Upper lobe of right lung (tissue), 1 donor: ENCODE measurements at regions of chr1 and their contacts with region 1.

Region 1: DNA sequence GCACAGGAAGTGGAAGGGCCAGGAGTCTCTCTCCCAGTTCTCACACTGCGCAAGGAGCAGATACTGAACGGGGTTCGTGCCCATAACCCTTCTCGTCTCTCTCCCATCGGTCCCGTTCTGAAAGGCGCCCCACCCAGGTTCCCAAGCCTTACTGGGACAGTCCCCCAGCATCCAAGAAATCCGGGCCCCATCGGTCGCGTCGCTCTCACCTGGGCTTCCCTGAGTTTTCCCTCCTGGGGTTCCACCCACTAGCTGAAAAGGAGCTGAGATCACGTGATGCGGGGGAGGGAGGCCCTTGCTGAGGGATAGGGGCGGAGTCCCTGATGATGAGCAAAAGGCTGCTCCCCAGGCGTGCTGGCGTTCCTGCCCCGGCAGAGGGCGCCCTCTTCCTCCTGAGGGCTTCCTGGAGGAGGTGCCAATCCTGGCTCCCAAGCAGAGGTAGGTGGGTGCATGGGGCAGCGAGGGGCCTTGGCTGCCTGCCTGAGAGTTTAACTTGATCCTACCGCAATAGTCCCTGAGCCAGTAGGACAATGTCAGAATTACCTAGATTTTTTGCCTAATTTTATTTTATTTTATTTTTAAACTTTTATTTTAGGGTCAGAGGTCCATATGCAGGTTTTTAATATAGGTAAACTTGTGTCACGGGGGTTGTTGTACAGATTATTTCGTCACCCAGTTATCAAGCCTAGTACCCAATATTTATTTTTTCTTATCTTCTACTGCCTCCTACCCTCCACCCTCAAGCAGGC is at the start of gene SPOCD1:
- DNase-seq: peak; percentile 93
- ATAC-seq: peak; percentile 99
- H3K4me3 ChIP-seq: no peak within 1 kb of the TSS
- H3K27ac ChIP-seq: no peak within 1 kb of the TSS
- H3K4me1 ChIP-seq: no peaks in the 10 kb centered on the region
- H3K27me3 ChIP-seq: no peaks in the 10 kb centered on the region
- CTCF ChIP-seq: peak; percentile 82
- total RNA-seq, gene SPOCD1: 31.4 TPM

Region 2: GRCh38 chr1:31955917-31956736 is 140.2 kb after region 1 on chr1:
- intact Hi-C with region 1: loop called (anchors 10 kb)
- DNase-seq: peak; percentile 85
- ATAC-seq: peak; percentile 91
- H3K4me3 ChIP-seq: no peak overlapping the region
- H3K27ac ChIP-seq: peak overlapping the region; percentile 90
- H3K4me1 ChIP-seq: peaks cover 40% of the 10 kb centered on the region
- H3K27me3 ChIP-seq: no peaks in the 10 kb centered on the region
- CTCF ChIP-seq: peak; percentile 45